Activated naive CD4-positive, alpha-beta T cell treated with anti-CD3 and anti-CD28 coated beads for 36 hours (primary cell): ENCODE measurements at regions of chr11 and their contacts with region 1.

Region 1: GRCh38 chr11:58579192-58580129 is 598 bp downstream of the ZFP91 start:
- DNase-seq: peak; percentile 95
- H3K4me3 Mint-ChIP-seq: peak overlapping the region; percentile 100
- H3K27ac Mint-ChIP-seq: peak overlapping the region; percentile 99
- H3K4me1 Mint-ChIP-seq: peaks cover 53% of the 10 kb centered on the region
- H3K27me3 Mint-ChIP-seq: no peaks in the 10 kb centered on the region

Region 2: GRCh38 chr11:57657194-57658022 is 922.1 kb before region 1 on chr11 and contains the start of gene CLP1:
- CTCF ChIA-PET with region 1: no interaction called
- intact Hi-C with region 1: loop called (anchors 1 kb)
- DNase-seq: peak; percentile 100
- H3K4me3 Mint-ChIP-seq: peak within 1 kb of the TSS; percentile 92
- H3K27ac Mint-ChIP-seq: peak within 1 kb of the TSS; percentile 90
- H3K4me1 Mint-ChIP-seq: peaks cover 34% of the 10 kb centered on the region
- H3K27me3 Mint-ChIP-seq: no peaks in the 10 kb centered on the region
- total RNA-seq, gene CLP1: 11.3 to 14.2 TPM

Region 3: GRCh38 chr11:58222721-58223120 is 356.7 kb before region 1 on chr11:
- CTCF ChIA-PET with region 1: no interaction called
- intact Hi-C with region 1: no loop called
- DNase-seq: no peak
- H3K4me3 Mint-ChIP-seq: no peak overlapping the region
- H3K27ac Mint-ChIP-seq: no peak overlapping the region
- H3K4me1 Mint-ChIP-seq: no peaks in the 10 kb centered on the region
- H3K27me3 Mint-ChIP-seq: peaks cover 10% of the 10 kb centered on the region

Region 4: GRCh38 chr11:58524232-58525036 is 55.0 kb before region 1 on chr11:
- CTCF ChIA-PET with region 1: interaction called, 15 read pairs
- intact Hi-C with region 1: loop called (anchors 1 kb)
- DNase-seq: peak; percentile 67
- H3K4me3 Mint-ChIP-seq: peak overlapping the region; percentile 61
- H3K27ac Mint-ChIP-seq: peak overlapping the region; percentile 86
- H3K4me1 Mint-ChIP-seq: peaks cover 52% of the 10 kb centered on the region
- H3K27me3 Mint-ChIP-seq: no peaks in the 10 kb centered on the region

Region 5: GRCh38 chr11:58640386-58641023 is 61.0 kb after region 1 on chr11:
- CTCF ChIA-PET with region 1: interaction called, 13 read pairs
- intact Hi-C with region 1: no loop called
- DNase-seq: peak; percentile 10
- H3K4me3 Mint-ChIP-seq: no peak overlapping the region
- H3K27ac Mint-ChIP-seq: peak overlapping the region; percentile 20
- H3K4me1 Mint-ChIP-seq: peaks cover 20% of the 10 kb centered on the region
- H3K27me3 Mint-ChIP-seq: no peaks in the 10 kb centered on the region

Region 6: DNA sequence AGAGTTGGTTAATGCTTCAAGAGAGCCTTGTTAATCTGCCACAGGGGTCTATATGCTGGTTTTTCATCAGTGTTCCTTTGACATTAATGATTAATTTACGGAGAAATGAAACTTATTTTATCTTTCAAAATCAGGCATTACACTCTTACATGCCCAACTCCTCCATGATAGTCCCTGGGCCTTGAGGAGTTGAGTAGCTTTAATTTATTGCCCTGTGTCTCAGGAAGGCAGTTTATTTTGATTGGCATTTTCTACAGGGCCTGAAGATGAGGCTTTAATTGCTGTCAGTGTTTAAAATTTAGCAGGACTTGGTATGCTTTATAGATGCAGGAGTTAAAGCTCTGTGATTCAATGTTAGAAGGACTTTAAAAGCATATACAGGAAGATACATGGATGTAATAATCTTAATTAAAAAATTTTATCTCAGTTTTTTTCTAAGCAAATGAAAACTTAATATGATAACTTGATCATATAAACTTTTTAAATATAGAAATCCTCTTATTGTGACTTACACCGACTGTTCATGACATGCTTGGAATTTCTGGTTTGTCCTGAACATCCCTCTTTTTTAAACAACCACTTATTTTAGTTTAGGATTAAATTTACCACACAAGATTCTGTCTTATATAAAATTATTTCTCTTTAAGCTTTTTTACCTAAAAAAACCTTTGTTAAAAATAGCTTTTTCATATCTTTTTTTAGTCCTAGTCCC is 140.1 kb after region 1 on chr11:
- CTCF ChIA-PET with region 1: no interaction called
- intact Hi-C with region 1: no loop called
- DNase-seq: no peak
- H3K4me3 Mint-ChIP-seq: no peak overlapping the region
- H3K27ac Mint-ChIP-seq: no peak overlapping the region
- H3K4me1 Mint-ChIP-seq: no peaks in the 10 kb centered on the region
- H3K27me3 Mint-ChIP-seq: no peaks in the 10 kb centered on the region

Region 7: GRCh38 chr11:58900479-58901420 is 321.3 kb after region 1 on chr11:
- CTCF ChIA-PET with region 1: no interaction called
- intact Hi-C with region 1: loop called (anchors 2 kb)
- DNase-seq: peak; percentile 81
- H3K4me3 Mint-ChIP-seq: no peak overlapping the region
- H3K27ac Mint-ChIP-seq: no peak overlapping the region
- H3K4me1 Mint-ChIP-seq: no peaks in the 10 kb centered on the region
- H3K27me3 Mint-ChIP-seq: peaks cover 49% of the 10 kb centered on the region

Region 8: DNA sequence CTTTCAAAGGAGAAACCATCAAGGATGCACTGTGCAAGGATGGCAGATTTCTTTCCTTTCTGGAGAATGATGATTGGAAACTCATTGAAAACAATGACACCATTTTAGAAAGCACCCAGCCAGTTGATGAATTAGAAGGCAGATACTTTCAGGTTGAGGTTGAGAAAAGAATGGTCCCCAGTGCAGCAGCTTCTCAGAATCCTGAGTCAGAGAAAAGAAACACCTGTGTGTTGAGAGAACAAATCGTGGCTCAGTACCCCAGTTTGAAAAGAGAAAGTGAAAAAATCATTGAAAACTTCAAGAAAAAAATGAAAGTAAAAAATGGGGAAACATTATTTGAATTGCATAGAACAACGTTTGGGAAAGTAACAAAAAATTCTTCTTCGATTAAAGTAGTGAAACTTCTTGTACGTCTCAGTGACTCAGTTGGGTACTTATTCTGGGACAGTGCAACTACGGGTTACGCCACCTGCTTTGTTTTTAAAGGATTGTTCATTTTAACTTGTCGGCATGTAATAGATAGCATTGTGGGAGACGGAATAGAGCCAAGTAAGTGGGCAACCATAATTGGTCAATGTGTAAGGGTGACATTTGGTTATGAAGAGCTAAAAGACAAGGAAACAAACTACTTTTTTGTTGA is 573.0 kb after region 1 on chr11:
- CTCF ChIA-PET with region 1: no interaction called
- intact Hi-C with region 1: loop called (anchors 1 kb)
- DNase-seq: peak; percentile 71
- H3K4me3 Mint-ChIP-seq: peak overlapping the region; percentile 53
- H3K27ac Mint-ChIP-seq: peak overlapping the region; percentile 91
- H3K4me1 Mint-ChIP-seq: peaks cover 38% of the 10 kb centered on the region
- H3K27me3 Mint-ChIP-seq: no peaks in the 10 kb centered on the region